ENCODE measurements at regions of chr14 and their contacts with region 1.

Region 1: DNA sequence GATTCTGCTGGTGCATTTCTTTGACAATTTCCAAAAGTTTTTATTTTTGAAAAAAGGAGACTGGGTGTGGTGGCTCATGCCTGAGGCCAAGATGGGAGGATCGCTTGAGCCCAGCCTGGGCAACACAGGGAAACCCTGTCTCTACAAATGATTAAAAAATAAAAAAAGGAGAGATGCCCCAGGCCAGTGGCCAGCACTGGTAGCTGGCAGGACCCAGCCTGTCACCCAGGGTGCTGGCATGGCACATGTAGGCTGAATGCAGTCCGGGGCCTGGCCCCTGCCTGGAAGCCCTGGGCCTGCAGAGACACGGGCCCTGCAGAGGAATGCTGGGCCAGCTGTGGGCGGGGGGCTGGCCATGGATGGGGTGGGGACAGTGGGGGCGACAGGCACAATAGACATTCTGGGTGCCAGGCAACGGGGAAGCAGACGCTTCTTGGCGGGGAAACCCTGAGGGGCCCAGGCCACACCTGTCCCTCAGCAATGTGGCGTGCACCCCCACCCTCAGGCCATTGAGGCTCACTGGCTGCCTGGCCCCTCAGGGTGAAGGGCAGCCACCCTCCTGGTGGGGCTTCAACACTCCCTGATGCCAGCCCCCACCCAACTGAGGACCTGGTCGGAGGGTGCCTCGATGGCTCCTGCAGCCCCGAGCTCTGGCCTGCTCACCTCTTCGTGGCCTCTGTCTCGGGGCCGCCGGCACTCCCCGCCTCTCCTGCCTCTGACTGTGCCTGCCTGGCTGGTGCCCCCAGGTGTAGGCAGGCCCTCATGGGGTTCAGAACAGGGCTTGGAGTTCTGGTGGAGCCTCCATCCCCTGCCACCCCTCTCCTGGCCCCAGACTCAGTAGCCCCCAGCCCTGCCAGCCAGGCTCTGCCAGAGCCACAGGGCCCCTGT is 12.1 kb downstream of the TRMT61A start:
- DNase-seq: no peak
- H3K4me3 ChIP-seq: no peak overlapping the region; the same call in 1 of the 2 replicates
- H3K27ac ChIP-seq: peak overlapping the region; percentile 96
- H3K4me1 ChIP-seq: peaks cover 58% of the 10 kb centered on the region
- H3K27me3 ChIP-seq: no peaks in the 10 kb centered on the region
- CTCF ChIP-seq: no peak; the same call in 1 of the 2 replicates

Region 2: GRCh38 chr14:103031956-103032355 is 509.1 kb before region 1 on chr14:
- CTCF ChIA-PET with region 1: interaction called, 10 read pairs
- POLR2A ChIA-PET with region 1: no interaction called
- intact Hi-C with region 1: no loop called
- DNase-seq: peak in 1 of 2 experiments; percentile 58
- H3K4me3 ChIP-seq: no peak overlapping the region
- H3K27ac ChIP-seq: no peak overlapping the region
- H3K4me1 ChIP-seq: peaks cover 36% of the 10 kb centered on the region
- H3K27me3 ChIP-seq: no peaks in the 10 kb centered on the region
- CTCF ChIP-seq: peak; percentile 51

Region 3: GRCh38 chr14:103404032-103404918 is 136.8 kb before region 1 on chr14:
- CTCF ChIA-PET with region 1: no interaction called
- POLR2A ChIA-PET with region 1: no interaction called
- intact Hi-C with region 1: no loop called
- DNase-seq: no peak
- H3K4me3 ChIP-seq: no peak overlapping the region
- H3K27ac ChIP-seq: peak overlapping the region; percentile 63
- H3K4me1 ChIP-seq: peaks cover 36% of the 10 kb centered on the region
- H3K27me3 ChIP-seq: no peaks in the 10 kb centered on the region
- CTCF ChIP-seq: no peak

Region 4: GRCh38 chr14:103520657-103521437 is 20.2 kb before region 1 on chr14:
- CTCF ChIA-PET with region 1: interaction called, 15 read pairs
- POLR2A ChIA-PET with region 1: interaction called, 6 read pairs
- intact Hi-C with region 1: loop called (anchors 1 kb)
- DNase-seq: peak; percentile 82 to 95
- H3K4me3 ChIP-seq: peak overlapping the region; percentile 66
- H3K27ac ChIP-seq: peak overlapping the region; percentile 16
- H3K4me1 ChIP-seq: peaks cover 11% of the 10 kb centered on the region
- H3K27me3 ChIP-seq: no peaks in the 10 kb centered on the region
- CTCF ChIP-seq: peak; percentile 81

Region 5: DNA sequence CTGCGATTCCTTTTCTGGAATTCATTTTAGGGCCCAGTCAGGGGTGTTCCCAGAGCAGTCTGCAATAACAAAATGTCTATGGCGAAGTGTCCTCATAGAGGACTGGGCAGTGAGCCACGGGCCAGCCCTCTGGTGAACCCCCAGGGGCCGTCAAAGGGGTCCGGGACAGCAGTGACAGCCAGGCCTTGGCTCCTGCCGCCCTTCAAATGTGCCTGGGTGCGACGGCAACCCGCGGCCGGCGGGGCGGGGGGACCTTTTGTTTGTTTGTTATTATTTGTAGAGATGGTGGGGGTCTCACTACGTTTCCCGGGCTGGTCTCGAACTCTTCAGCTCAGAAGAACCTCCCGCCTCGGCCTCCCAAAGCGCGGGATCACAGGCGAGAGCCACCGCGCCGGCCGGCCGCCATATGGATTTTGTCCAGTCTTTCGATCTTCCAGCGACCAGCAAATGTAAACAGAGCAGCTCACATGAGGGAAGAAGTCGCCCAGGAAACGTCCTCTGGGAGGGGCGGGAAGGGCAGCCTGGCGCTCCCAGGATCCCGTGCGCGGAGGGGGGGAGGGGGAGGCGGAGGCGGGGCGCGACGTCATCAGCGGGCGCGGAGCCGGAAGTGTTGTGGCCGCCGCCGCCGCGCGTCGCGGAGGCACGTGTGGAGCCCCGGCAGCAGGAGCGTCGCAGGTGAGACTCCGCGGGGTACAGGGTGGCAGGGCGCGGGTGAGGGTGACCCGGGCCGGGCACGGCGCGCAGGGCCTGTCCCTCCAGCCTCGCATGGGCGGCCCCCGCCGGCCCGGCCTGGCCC is 12.3 kb before region 1 on chr14 and contains the start of gene TRMT61A:
- CTCF ChIA-PET with region 1: interaction called, 5 read pairs
- POLR2A ChIA-PET with region 1: interaction called, 7 read pairs
- intact Hi-C with region 1: loop called (anchors 1 kb)
- DNase-seq: peak; percentile 89 to 93
- H3K4me3 ChIP-seq: peak within 1 kb of the TSS; percentile 79
- H3K27ac ChIP-seq: peak within 1 kb of the TSS; percentile 23
- H3K4me1 ChIP-seq: peaks cover 23% of the 10 kb centered on the region
- H3K27me3 ChIP-seq: no peaks in the 10 kb centered on the region
- CTCF ChIP-seq: no peak
- total RNA-seq, gene TRMT61A: 22.5 and 25.9 TPM in 2 replicates

Region 6: DNA sequence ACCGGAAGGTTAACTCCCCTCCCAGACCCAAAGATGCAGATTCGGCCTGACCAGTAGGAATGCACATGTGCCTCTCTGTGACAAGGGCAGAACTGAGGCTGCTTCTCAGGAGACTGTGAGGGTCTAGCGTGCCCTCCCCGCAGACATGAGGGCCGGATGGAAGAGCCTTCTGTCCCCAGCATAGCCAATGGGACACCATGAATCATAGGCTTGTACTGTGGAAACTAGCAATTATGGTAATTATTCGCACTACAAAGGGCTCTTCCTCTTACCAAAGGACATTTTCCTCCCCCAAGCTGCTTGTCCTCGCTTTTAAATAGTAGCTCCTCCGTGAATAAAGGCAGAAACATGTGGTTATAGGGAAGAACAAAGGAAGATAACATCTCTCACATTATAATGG is 27.9 kb after region 1 on chr14:
- CTCF ChIA-PET with region 1: no interaction called
- POLR2A ChIA-PET with region 1: interaction called, 14 read pairs
- intact Hi-C with region 1: no loop called
- DNase-seq: peak in 1 of 2 experiments; percentile 17
- H3K4me3 ChIP-seq: no peak overlapping the region
- H3K27ac ChIP-seq: no peak overlapping the region
- H3K4me1 ChIP-seq: peaks cover 14% of the 10 kb centered on the region
- H3K27me3 ChIP-seq: no peaks in the 10 kb centered on the region
- CTCF ChIP-seq: no peak